B cell (primary cell): ENCODE measurements at regions of chr19 and their contacts with region 1.

Region 1: DNA sequence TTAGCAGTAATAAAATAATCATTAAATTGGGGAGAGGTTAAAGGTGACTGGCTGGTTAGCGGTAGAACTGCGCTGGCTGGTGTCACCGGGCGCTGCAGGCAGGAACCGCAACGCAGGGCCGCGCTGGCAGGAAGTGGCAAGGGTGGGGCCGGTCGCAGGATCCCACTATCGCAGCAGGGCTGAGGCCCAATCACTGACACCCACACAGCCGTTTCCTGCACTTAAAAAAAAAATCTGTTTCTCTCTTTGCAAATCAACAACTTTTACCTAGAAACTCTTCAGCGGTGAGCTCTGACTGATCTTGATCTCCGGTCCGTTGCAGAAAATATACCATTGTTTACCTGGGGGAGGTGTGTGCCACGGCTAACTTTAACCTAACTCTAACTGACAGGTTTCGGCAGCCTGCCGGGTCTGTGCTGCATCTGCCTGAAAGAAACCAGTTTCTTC is 46.9 kb downstream of the KLF2 start:
- DNase-seq: peak; percentile 93
- ATAC-seq: peak; percentile 73
- H3K4me3 ChIP-seq: peak overlapping the region; percentile 15 to 47 (median 19)
- H3K4me3 Mint-ChIP-seq: no peak overlapping the region
- H3K27ac ChIP-seq: peak overlapping the region; percentile 85 to 94
- H3K27ac Mint-ChIP-seq: no peak overlapping the region
- H3K4me1 ChIP-seq: peaks cover 94 to 100% of the 10 kb centered on the region in 2 donors
- H3K4me1 Mint-ChIP-seq: peaks cover 38% of the 10 kb centered on the region
- H3K27me3 ChIP-seq: no peaks in the 10 kb centered on the region
- H3K27me3 Mint-ChIP-seq: no peaks in the 10 kb centered on the region
- CTCF ChIP-seq: peak; percentile 27

Region 2: DNA sequence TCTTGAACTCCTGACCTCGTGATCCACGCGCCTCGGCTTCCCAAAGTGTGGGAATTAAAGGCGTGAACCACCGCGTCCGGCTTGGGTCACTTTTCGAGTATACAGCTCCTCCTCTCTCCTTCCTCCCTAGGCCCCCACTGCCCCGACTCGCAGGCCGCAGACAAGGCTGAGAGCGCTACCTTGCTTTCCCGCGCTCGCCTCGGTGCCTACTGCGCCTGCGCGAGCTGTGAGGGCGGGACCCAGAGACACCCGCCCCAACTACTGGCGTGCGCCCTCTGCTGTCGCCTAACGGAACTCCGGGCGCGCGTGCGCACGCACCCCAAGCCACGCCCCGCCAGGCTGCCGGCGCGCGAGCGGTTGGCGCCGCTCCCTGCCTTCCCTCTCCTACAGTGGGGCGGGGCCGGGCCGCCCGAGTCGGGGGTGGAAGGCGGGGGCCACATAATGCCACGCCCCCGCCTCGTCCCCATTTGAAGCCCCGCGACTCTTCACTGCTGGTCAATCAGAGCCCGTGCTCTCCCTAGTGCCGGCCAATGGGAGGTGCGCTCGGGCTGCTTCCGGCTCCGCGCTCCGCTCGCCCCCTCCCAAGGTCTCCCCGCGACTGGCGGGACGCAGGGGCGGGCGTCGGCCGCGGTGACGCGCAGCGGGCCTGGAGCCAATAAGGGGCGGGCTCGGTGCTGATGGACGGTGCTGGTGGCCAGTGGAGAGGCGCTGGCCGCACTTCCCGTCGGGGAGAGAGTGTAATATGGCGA is 260.2 kb before region 1 on chr19 and contains the start of gene RAB8A:
- CTCF ChIA-PET with region 1: no interaction called
- POLR2A ChIA-PET with region 1: no interaction called
- intact Hi-C with region 1: loop called (anchors 1 kb)
- DNase-seq: peak; percentile 100
- ATAC-seq: peak; percentile 88
- H3K4me3 ChIP-seq: peak within 1 kb of the TSS; percentile 50 to 99 (median 96)
- H3K4me3 Mint-ChIP-seq: peak within 1 kb of the TSS; percentile 96
- H3K27ac ChIP-seq: peak within 1 kb of the TSS; percentile 74 to 97
- H3K27ac Mint-ChIP-seq: peak within 1 kb of the TSS; percentile 95
- H3K4me1 ChIP-seq: peaks cover 29 to 53% of the 10 kb centered on the region in 2 donors
- H3K4me1 Mint-ChIP-seq: peaks cover 42% of the 10 kb centered on the region
- H3K27me3 ChIP-seq: no peaks in the 10 kb centered on the region
- H3K27me3 Mint-ChIP-seq: no peaks in the 10 kb centered on the region
- CTCF ChIP-seq: peak; percentile 91
- total RNA-seq, gene RAB8A: 115 and 117 TPM in 2 replicates

Region 3: DNA sequence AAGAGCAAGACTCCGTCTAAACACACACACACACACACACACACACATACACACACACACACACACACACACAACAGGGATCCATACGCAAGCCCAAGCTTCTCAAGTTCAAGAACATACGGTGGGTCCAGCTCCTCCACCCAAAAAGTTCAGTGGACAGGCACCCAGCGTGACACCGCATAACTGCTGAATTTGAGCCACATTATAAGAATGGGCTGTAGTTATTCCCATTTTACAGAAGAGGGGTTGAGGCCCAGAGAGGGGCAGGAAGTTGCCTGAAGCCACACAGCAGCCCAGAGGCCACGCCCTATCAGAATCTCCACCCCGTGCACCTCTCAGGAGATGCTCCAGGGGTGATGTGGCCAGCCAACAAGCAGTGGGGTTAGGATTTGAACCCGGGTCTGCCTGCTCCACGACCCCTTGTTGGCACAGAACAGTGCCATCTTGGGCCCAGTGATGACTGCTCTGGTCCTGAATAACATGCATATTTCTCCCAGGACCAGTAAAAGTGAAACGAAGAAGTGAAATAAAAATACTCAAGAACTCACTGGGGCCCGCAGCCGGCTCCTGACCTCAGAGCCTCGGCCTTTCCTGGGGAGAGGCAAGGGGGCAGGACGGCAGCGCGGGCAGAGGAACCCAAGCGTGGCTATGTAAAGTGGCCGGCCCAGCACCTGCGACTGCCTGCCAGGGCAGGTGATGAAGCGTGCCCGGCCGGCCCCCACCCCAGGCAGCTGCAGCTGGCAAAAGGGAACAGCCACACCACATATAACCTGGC is 112.0 kb before region 1 on chr19:
- CTCF ChIA-PET with region 1: interaction called, 6 read pairs
- POLR2A ChIA-PET with region 1: interaction called, 9 read pairs
- intact Hi-C with region 1: loop called (anchors 1 kb)
- DNase-seq: peak; percentile 94
- ATAC-seq: peak; percentile 79
- H3K4me3 ChIP-seq: peak overlapping the region in 1 of 5 experiments; percentile 42
- H3K4me3 Mint-ChIP-seq: peak overlapping the region; percentile 78
- H3K27ac ChIP-seq: peak overlapping the region; percentile 87 to 89
- H3K27ac Mint-ChIP-seq: peak overlapping the region; percentile 95
- H3K4me1 ChIP-seq: peaks cover 75 to 94% of the 10 kb centered on the region in 2 donors
- H3K4me1 Mint-ChIP-seq: peaks cover 83% of the 10 kb centered on the region
- H3K27me3 ChIP-seq: no peaks in the 10 kb centered on the region
- H3K27me3 Mint-ChIP-seq: no peaks in the 10 kb centered on the region
- CTCF ChIP-seq: no peak

Region 4: GRCh38 chr19:16293118-16294091 is 78.2 kb before region 1 on chr19:
- CTCF ChIA-PET with region 1: no interaction called
- POLR2A ChIA-PET with region 1: no interaction called
- intact Hi-C with region 1: no loop called
- DNase-seq: no peak
- ATAC-seq: no peak
- H3K4me3 ChIP-seq: no peak overlapping the region
- H3K4me3 Mint-ChIP-seq: no peak overlapping the region
- H3K27ac ChIP-seq: no peak overlapping the region
- H3K27ac Mint-ChIP-seq: no peak overlapping the region
- H3K4me1 ChIP-seq: no peaks in the 10 kb centered on the region
- H3K4me1 Mint-ChIP-seq: peaks cover 1% of the 10 kb centered on the region
- H3K27me3 ChIP-seq: peaks cover 0 to 3% (median 0%) of the 10 kb centered on the region in 4 experiments
- H3K27me3 Mint-ChIP-seq: no peaks in the 10 kb centered on the region
- CTCF ChIP-seq: no peak

Region 5: GRCh38 chr19:16330368-16330801 is 41.2 kb before region 1 on chr19:
- CTCF ChIA-PET with region 1: interaction called, 60 read pairs
- POLR2A ChIA-PET with region 1: interaction called, 337 read pairs
- intact Hi-C with region 1: loop called (anchors 1 kb)
- DNase-seq: peak; percentile 95
- ATAC-seq: peak; percentile 63
- H3K4me3 ChIP-seq: peak overlapping the region in 1 of 5 experiments; percentile 20
- H3K4me3 Mint-ChIP-seq: peak overlapping the region; percentile 70
- H3K27ac ChIP-seq: peak overlapping the region; percentile 23 to 35
- H3K27ac Mint-ChIP-seq: peak overlapping the region; percentile 98
- H3K4me1 ChIP-seq: peaks cover 24 to 40% of the 10 kb centered on the region in 2 donors
- H3K4me1 Mint-ChIP-seq: peaks cover 51% of the 10 kb centered on the region
- H3K27me3 ChIP-seq: no peaks in the 10 kb centered on the region
- H3K27me3 Mint-ChIP-seq: no peaks in the 10 kb centered on the region
- CTCF ChIP-seq: no peak

Region 6: DNA sequence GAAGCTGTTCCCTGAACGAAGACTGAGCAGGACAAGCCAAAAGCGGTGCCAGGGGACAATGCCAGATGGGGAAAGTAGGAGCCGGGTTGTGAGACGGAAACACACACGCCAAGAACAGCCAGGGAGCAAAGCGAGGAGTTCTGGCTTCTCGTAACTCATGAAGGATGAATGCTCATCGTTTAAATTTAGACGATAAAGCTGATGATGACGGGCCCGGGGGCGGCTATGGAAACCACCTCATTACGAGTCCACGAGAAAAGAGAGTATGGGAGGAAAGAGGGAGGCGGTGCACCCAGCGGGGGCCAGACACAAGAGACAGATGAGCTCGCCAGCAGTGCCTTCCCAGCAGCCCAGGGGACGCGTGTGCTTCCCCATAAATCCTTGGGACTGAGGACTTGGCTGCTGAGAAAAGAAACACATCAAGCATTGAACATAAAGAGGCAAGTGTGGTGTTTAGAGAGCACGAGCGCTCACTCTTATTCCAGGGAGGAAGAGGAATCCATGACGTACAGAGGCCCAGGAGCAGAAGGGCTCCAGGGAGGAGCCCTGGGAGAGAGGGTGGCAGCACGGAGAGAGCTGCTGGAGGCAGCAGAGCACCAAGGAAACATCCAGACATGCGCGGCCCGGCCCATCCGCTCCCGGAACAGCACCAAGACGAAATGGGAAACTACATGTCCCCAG is 29.5 kb after region 1 on chr19:
- CTCF ChIA-PET with region 1: interaction called, 12 read pairs
- POLR2A ChIA-PET with region 1: interaction called, 18 read pairs
- intact Hi-C with region 1: loop called (anchors 1 kb)
- DNase-seq: no peak
- ATAC-seq: no peak
- H3K4me3 ChIP-seq: no peak overlapping the region
- H3K4me3 Mint-ChIP-seq: no peak overlapping the region
- H3K27ac ChIP-seq: peak overlapping the region in 1 of 2 donors; percentile 27
- H3K27ac Mint-ChIP-seq: peak overlapping the region; percentile 64
- H3K4me1 ChIP-seq: peaks cover 44 to 58% of the 10 kb centered on the region in 2 donors
- H3K4me1 Mint-ChIP-seq: peaks cover 56% of the 10 kb centered on the region
- H3K27me3 ChIP-seq: no peaks in the 10 kb centered on the region
- H3K27me3 Mint-ChIP-seq: no peaks in the 10 kb centered on the region
- CTCF ChIP-seq: no peak

Region 7: DNA sequence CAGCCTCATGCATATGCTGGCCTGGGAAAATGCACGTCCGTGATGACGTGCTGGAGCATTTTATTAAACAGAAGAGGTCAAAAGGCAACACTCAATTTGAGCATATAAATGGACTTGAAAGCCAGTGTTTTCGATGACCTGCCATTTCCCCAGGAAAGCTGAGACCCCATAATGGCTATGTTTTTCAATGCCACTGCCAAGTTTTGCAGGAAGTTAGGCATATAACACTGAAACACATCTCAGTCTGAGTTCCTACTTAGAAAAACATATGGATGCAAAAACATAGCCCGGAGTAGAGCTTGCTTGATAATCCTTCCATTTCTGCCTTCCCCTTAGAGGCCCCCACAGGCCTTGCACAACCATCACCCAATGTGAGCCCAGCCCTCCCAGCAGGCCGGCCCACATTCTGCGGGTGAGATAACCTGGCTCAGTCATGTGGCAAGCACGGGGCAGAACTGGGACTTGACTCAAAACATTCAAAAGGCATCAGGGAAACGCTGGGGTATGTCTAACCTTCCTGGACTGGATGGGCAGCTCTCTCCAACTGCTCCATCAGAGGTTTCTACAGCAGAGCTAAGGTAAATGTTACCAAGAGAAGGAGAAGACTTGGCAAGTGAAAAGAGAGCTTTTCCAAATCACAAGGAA is 75.3 kb after region 1 on chr19:
- CTCF ChIA-PET with region 1: interaction called, 3 read pairs
- POLR2A ChIA-PET with region 1: interaction called, 10 read pairs
- intact Hi-C with region 1: loop called (anchors 1 kb)
- DNase-seq: peak; percentile 79
- ATAC-seq: peak; percentile 34
- H3K4me3 ChIP-seq: peak overlapping the region in 1 of 5 experiments; percentile 26
- H3K4me3 Mint-ChIP-seq: peak overlapping the region; percentile 76
- H3K27ac ChIP-seq: peak overlapping the region; percentile 93 to 98
- H3K27ac Mint-ChIP-seq: peak overlapping the region; percentile 97
- H3K4me1 ChIP-seq: peaks cover 86 to 94% of the 10 kb centered on the region in 2 donors
- H3K4me1 Mint-ChIP-seq: peaks cover 85% of the 10 kb centered on the region
- H3K27me3 ChIP-seq: no peaks in the 10 kb centered on the region
- H3K27me3 Mint-ChIP-seq: no peaks in the 10 kb centered on the region
- CTCF ChIP-seq: no peak

Region 8: DNA sequence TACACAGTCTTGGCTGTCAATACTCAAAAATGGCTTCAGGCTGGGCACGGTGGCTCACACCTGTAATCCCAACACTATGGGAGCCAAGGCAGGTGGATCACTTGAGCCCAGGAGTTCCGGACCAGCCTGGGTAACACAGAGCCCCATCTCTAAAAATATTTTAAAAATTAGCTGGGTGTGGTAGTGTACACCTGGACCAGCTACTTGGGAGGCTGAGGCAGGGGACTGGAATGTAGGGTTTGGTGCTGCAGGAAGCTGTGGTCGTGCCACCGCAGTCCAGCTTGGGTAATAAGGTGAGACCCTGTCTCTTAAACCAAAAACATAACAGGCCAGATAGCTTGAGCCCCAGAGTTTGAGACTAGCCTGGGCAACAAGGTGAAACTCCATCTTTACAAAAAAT is 177.4 kb after region 1 on chr19:
- CTCF ChIA-PET with region 1: no interaction called
- POLR2A ChIA-PET with region 1: no interaction called
- intact Hi-C with region 1: no loop called
- DNase-seq: no peak
- ATAC-seq: no peak
- H3K4me3 ChIP-seq: no peak overlapping the region
- H3K4me3 Mint-ChIP-seq: no peak overlapping the region
- H3K27ac ChIP-seq: no peak overlapping the region
- H3K27ac Mint-ChIP-seq: no peak overlapping the region
- H3K4me1 ChIP-seq: peaks cover 9 to 17% of the 10 kb centered on the region in 2 donors
- H3K4me1 Mint-ChIP-seq: peaks cover 11% of the 10 kb centered on the region
- H3K27me3 ChIP-seq: no peaks in the 10 kb centered on the region
- H3K27me3 Mint-ChIP-seq: no peaks in the 10 kb centered on the region
- CTCF ChIP-seq: no peak

Region 9: DNA sequence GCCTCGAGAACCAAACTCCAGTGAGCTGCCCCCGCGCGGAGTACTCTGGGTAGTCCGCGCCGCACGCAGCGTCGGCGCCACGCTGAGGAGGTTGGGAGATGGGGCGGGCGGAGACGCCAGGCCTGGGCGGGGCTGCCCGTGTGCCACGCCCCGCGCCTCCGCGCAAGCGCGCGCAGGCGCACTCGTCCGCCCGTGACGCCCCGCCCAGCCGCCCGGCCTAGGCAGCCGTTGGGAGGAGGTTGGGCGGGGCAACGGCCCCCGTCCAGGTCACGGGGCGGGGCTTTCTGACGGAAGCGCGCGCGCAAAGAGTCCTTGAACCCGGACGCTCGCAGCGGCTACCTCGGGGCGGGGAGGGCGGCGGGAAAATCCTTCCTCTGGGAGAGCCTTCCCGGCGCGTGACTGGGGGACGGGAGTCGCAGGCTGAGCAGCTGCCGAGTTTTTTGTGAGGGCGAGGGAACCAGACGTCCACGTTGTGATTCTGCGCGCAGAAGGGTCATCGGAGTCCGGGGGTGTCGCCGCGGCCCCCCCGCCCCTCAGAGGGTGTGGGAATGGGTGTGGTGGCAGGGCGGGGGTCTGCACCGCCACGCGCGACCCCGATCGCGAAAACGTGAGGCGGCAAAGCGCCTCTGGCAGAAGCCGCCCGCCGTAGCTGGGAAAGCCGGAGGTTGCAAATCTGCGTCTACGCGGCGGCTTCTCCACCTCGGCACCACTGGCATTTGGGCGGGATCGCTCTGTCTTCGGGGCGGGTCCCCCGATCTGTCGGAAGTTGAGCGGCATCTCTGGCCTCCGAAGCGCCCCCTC is 256.8 kb after region 1 on chr19 and contains the start of gene MED26:
- CTCF ChIA-PET with region 1: no interaction called
- POLR2A ChIA-PET with region 1: no interaction called
- intact Hi-C with region 1: no loop called
- DNase-seq: peak; percentile 97
- ATAC-seq: peak; percentile 93
- H3K4me3 ChIP-seq: peak within 1 kb of the TSS; percentile 18 to 93 (median 87)
- H3K4me3 Mint-ChIP-seq: peak within 1 kb of the TSS; percentile 97
- H3K27ac ChIP-seq: peak within 1 kb of the TSS; percentile 87 to 93
- H3K27ac Mint-ChIP-seq: peak within 1 kb of the TSS; percentile 98
- H3K4me1 ChIP-seq: peaks cover 23 to 27% of the 10 kb centered on the region in 2 donors
- H3K4me1 Mint-ChIP-seq: peaks cover 53% of the 10 kb centered on the region
- H3K27me3 ChIP-seq: no peaks in the 10 kb centered on the region
- H3K27me3 Mint-ChIP-seq: no peaks in the 10 kb centered on the region
- CTCF ChIP-seq: no peak
- total RNA-seq, gene MED26: 32.2 and 33.6 TPM in 2 replicates